ENCODE measurements at regions of chr11 and their contacts with region 1.

Region 1: DNA sequence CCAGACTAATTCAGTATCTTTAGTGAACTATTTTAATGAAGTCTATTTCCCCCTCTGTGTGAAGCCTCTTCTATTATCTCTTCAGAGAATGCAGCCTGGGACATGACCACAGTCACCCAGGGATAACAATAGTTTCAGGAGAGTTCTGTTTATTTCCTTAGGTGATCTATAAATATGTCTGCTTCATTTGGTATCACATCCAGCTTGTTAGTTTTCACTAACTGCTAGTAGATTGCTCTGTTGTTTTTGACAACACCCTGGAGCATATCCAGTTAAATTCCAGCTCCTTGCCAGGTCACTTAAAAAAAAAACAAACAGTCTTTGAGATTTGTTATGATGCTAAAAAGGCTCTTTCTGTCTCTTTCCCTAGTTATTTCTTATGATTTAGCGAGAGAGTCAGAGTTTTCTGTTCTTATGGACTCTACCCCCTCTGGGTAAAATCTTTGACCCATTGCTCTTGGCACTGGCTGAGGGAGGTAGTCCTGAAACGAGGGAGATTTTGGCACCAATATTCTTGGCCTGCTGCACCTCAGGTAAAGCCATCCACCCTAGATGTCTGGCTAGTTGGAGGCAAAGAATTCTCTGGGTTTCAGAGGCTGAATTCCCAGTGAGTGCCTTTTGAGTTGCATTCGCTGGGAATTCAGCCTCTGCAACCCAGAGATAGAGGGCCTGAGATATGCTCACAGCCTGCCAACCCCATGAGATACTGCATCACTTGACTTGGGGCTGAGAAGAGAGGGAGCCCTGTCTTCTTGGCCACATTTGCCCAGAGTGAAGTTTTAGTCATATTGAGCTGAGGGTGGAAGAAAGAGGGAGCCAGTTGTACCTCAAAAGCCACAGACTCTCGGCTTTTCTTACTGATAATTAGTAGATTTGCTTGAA is 159.1 kb downstream of the PGR start:
- DNase-seq: no peak
- H3K4me3 ChIP-seq: no peak overlapping the region
- H3K27ac ChIP-seq: no peak overlapping the region
- H3K4me1 ChIP-seq: peaks cover 0 to 5% (median 0%) of the 10 kb centered on the region in 4 donors
- H3K27me3 ChIP-seq: no peaks in the 10 kb centered on the region
- CTCF ChIP-seq: no peak

Region 2: GRCh38 chr11:100888836-100889235 is 81.7 kb before region 1 on chr11:
- intact Hi-C with region 1: no loop called
- DNase-seq: no peak
- H3K4me3 ChIP-seq: no peak overlapping the region
- H3K27ac ChIP-seq: no peak overlapping the region
- H3K4me1 ChIP-seq: peaks cover 0 to 22% (median 4%) of the 10 kb centered on the region in 4 donors
- H3K27me3 ChIP-seq: no peaks in the 10 kb centered on the region
- CTCF ChIP-seq: no peak

Region 3: GRCh38 chr11:101436511-101437142 is 466.1 kb after region 1 on chr11:
- intact Hi-C with region 1: loop called (anchors 10 kb)
- DNase-seq: no peak
- H3K4me3 ChIP-seq: no peak overlapping the region
- H3K27ac ChIP-seq: no peak overlapping the region
- H3K4me1 ChIP-seq: peaks cover 0 to 17% (median 13%) of the 10 kb centered on the region in 4 donors
- H3K27me3 ChIP-seq: no peaks in the 10 kb centered on the region
- CTCF ChIP-seq: peak; percentile 45 to 69